ENCODE measurements at regions of chr12 and their contacts with region 1.

Region 1: DNA sequence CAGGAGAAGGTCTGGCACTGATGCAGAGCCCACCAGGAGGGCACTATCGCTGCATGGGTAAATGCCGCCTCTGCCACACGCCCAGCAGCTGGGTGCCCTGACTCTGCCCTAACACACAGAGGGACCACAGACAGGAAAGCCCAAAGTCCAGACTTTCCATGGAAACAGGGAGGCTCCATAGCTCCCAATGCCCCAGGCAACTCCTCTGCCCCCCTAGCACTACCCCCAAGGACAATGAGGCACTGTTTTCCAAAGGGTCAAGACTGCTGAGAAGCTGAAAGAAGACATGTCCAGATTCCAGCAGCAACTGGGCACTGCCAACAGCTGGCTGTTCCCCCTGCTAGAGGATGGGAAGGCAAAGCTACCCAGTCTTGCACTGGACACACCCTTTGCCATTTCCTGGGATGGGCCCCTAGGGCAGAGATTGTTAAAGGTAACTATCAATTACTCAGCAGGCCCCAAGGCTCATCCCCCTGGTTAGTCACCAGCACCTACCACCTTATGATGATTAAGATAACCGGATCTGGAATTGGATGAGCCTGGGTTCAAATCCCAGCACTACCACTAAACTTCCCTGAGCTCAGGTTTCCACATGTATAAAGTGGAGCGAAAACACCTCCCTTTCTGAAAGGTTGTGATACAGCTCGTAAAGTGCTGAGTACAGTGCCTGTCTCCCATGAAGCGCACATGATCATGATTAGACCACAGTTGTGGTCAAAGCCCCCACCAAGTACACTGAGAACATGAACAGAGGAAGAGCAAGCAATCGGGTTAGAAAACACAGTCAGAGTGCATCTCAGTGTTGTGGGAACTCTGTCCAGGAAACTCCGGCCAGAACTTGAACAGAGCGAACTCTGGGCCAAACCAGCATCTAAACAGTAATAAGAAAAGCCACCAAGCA is 3.3 kb downstream of the PXN start:
- DNase-seq: peak; percentile 76
- H3K4me3 ChIP-seq: no peak overlapping the region
- H3K27ac ChIP-seq: peak overlapping the region; percentile 94 to 95
- H3K4me1 ChIP-seq: peaks cover 50% of the 10 kb centered on the region
- H3K27me3 ChIP-seq: no peaks in the 10 kb centered on the region
- CTCF ChIP-seq: no peak
- POLR2A ChIP-seq: no peak

Region 2: DNA sequence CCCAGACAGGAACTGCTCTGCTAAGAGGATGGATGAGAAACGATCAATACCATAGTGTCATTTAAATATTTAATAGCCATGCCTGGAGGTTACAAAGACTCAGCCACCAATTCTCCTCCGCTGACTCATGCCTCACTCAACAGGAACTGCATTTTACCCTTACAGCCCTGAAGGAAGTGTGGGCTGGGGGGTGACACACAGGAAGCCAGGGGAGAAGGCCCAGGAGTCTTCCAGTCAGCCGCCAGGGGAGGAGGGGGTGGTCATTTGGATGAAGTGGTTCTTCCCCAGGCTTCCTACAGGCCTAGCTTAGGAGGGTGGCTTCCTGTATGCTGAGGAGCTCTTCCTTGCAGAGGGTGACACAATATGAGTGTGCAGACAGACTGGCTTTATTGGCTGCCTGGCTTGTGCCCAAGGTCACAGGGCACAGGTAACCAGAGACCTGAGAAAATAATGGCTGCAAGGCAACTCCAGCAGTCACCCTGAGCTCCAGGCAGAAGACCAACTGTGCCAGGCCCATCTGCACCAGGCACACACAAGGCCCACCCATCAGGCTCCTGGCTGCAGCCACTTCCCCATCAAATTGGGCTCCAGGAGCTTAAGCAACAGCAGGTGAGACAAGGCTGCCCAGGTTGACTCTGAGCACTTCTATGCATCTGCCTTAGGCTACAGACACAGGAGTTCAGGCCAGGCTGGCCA is 30.7 kb before region 1 on chr12:
- intact Hi-C with region 1: loop called (anchors 2 kb)
- DNase-seq: no peak
- H3K4me3 ChIP-seq: no peak overlapping the region
- H3K27ac ChIP-seq: peak overlapping the region in 1 of 2 donors; percentile 81
- H3K4me1 ChIP-seq: peaks cover 91% of the 10 kb centered on the region
- H3K27me3 ChIP-seq: no peaks in the 10 kb centered on the region
- CTCF ChIP-seq: no peak
- POLR2A ChIP-seq: no peak

Region 3: DNA sequence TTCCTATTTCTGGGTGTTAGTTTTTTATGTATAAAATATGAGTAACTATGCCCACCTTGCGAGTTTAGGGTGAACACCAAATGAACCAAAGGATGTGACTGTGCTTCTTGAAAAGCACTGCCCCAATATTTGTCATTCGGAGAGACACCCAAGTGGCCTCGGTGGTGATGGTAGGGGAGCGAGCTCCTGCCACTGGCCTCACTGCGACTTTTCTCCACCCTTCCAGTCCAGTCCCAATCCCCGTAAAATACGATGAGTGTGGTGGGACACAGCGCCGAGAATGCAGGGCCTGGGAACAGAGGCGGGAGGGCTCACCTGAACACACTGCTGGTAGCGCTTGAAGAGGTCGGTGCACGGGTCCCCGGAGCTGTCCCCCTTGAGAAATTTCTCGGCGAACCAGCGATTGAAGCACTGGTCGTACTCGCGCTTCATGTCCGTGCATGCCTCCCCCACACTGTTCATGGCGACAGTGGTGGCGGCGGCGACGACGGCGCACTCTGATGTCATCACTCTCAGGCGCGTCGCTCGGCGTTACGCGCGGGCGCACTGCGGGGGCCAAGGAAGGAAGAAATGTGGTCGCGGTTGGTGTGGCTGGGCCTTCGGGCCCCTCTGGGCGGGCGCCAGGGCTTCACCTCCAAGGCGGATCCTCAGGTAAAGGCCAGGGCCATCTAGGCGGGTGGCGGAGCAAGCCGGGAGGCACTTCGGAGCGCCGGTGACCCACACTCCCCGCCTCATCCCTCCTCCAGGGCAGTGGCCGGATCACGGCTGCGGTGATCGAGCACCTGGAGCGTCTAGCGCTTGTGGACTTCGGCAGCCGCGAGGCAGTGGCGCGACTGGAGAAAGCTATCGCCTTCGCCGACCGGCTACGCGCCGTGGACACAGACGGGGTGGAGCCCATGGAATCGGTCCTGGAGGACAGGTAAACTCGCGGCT is 184.0 kb after region 1 on chr12 and contains the starts of genes GATC and TRIAP1:
- intact Hi-C with region 1: no loop called
- DNase-seq: peak; percentile 86
- H3K4me3 ChIP-seq: peak within 1 kb of the TSS; percentile 75 to 97
- H3K27ac ChIP-seq: peak within 1 kb of the TSS; percentile 71 to 75
- H3K4me1 ChIP-seq: peaks cover 18% of the 10 kb centered on the region
- H3K27me3 ChIP-seq: no peaks in the 10 kb centered on the region
- CTCF ChIP-seq: peak in 2 of 3 experiments; percentile 10 to 39
- POLR2A ChIP-seq: no peak
- total RNA-seq, gene GATC: 17.5 to 20.9 TPM
- total RNA-seq, gene TRIAP1: 13.9 to 15.7 TPM

Measured in testis (tissue), 5 donors.